CD4-positive, alpha-beta T cell (primary cell): ENCODE measurements at regions of chr7 and their contacts with region 1.

Region 1: DNA sequence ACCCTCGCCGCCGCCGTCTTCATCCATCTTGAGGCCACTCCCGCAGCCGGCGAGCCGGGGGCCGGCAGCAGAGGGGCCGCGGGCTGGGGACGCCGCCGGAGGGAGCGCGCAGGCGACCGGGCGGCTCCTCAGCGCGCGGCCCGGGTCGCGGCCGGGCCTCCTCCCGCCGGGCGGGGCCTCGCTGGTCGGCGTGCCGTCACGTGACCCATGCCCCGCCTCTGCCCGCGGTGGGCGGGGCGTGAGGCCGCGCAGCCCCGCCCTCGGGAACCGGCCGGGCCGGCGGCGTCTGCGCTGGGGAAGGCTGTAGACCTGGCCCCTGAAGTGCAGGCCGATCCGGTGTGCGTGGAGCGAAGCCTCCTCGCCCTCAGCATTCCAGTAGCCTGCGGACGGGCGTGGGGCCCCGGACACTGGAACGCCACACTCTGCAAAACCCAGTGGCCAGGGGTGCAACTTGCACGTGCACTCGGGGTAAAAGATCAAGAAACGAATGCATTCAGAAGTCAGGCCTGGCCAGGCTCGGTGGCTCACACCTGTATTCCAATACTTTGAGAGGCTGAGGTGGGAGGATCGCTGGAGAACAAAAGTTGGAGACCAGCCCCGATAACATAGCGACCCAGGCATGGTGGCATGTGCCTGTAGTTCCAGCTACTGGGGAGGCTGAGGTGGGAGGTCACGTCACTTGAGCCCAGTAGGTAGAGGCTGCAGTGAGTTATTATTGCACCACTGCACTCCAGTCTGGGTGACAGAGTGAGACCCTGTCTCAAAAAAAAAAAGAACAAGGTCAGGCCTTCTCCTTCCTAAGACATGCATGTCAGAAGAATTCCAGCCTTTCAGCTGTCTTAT is at the start of gene CYTH3:
- DNase-seq: peak; percentile 39 to 91 (median 72)
- ATAC-seq: peak; percentile 82
- H3K4me3 ChIP-seq: peak within 1 kb of the TSS; percentile 74
- H3K4me3 Mint-ChIP-seq: peak within 1 kb of the TSS; percentile 91
- H3K27ac ChIP-seq: no peak within 1 kb of the TSS
- H3K27ac Mint-ChIP-seq: no peak within 1 kb of the TSS
- H3K4me1 ChIP-seq: peaks cover 21% of the 10 kb centered on the region
- H3K4me1 Mint-ChIP-seq: peaks cover 20% of the 10 kb centered on the region
- H3K27me3 ChIP-seq: no peaks in the 10 kb centered on the region
- H3K27me3 Mint-ChIP-seq: peaks cover 6% of the 10 kb centered on the region
- CTCF ChIP-seq: no peak
- total RNA-seq, gene CYTH3: 7.6 to 9.1 TPM

Region 2: DNA sequence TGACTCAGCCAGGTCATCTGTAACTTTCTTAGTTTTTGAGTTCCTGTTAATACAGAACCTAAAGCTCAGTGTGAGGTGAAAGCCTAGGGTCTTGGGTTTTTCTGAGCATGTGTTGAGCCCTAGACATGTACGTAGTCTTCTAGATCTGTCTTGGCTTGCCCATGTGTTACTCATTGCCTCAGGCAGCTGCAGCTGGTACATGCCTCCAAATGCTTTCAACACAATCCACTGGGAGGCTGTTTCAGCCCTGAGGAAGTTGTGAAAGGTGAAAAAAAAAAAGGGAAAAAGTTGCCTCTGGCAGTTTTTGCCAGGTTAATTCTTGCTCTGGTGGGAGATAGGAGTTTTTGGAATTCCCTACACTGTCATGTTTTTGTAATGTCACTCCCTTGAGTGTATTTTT is 625.9 kb before region 1 on chr7:
- CTCF ChIA-PET with region 1: no interaction called
- POLR2A ChIA-PET with region 1: no interaction called
- intact Hi-C with region 1: no loop called
- DNase-seq: no peak
- ATAC-seq: no peak
- H3K4me3 ChIP-seq: no peak overlapping the region
- H3K4me3 Mint-ChIP-seq: no peak overlapping the region
- H3K27ac ChIP-seq: no peak overlapping the region
- H3K27ac Mint-ChIP-seq: no peak overlapping the region
- H3K4me1 ChIP-seq: peaks cover 30% of the 10 kb centered on the region
- H3K4me1 Mint-ChIP-seq: peaks cover 30% of the 10 kb centered on the region
- H3K27me3 ChIP-seq: no peaks in the 10 kb centered on the region
- H3K27me3 Mint-ChIP-seq: no peaks in the 10 kb centered on the region
- CTCF ChIP-seq: no peak

Region 3: GRCh38 chr7:5773661-5774086 is 499.0 kb before region 1 on chr7:
- CTCF ChIA-PET with region 1: no interaction called
- POLR2A ChIA-PET with region 1: no interaction called
- intact Hi-C with region 1: no loop called
- DNase-seq: peak in 8 of 14 experiments; percentile 5 to 75 (median 14)
- ATAC-seq: no peak
- H3K4me3 ChIP-seq: no peak overlapping the region
- H3K4me3 Mint-ChIP-seq: peak overlapping the region; percentile 7
- H3K27ac ChIP-seq: no peak overlapping the region
- H3K27ac Mint-ChIP-seq: peak overlapping the region; percentile 30
- H3K4me1 ChIP-seq: peaks cover 41% of the 10 kb centered on the region
- H3K4me1 Mint-ChIP-seq: peaks cover 65% of the 10 kb centered on the region
- H3K27me3 ChIP-seq: no peaks in the 10 kb centered on the region
- H3K27me3 Mint-ChIP-seq: no peaks in the 10 kb centered on the region
- CTCF ChIP-seq: no peak

Region 4: GRCh38 chr7:6228361-6229229 is 44.1 kb before region 1 on chr7:
- CTCF ChIA-PET with region 1: no interaction called
- POLR2A ChIA-PET with region 1: no interaction called
- intact Hi-C with region 1: loop called in 1 of 2 experiments (anchors 10 kb)
- DNase-seq: peak in 1 of 14 experiments; percentile 22
- ATAC-seq: peak; percentile 54
- H3K4me3 ChIP-seq: no peak overlapping the region
- H3K4me3 Mint-ChIP-seq: no peak overlapping the region
- H3K27ac ChIP-seq: no peak overlapping the region
- H3K27ac Mint-ChIP-seq: no peak overlapping the region
- H3K4me1 ChIP-seq: peaks cover 18% of the 10 kb centered on the region
- H3K4me1 Mint-ChIP-seq: peaks cover 36% of the 10 kb centered on the region
- H3K27me3 ChIP-seq: no peaks in the 10 kb centered on the region
- H3K27me3 Mint-ChIP-seq: no peaks in the 10 kb centered on the region
- CTCF ChIP-seq: no peak

Region 5: GRCh38 chr7:6505685-6506574 is 233.2 kb after region 1 on chr7:
- CTCF ChIA-PET with region 1: no interaction called
- POLR2A ChIA-PET with region 1: no interaction called
- intact Hi-C with region 1: loop called in 1 of 2 experiments (anchors 5 kb)
- DNase-seq: peak in 1 of 14 experiments; percentile 29
- ATAC-seq: no peak
- H3K4me3 ChIP-seq: no peak overlapping the region
- H3K4me3 Mint-ChIP-seq: no peak overlapping the region
- H3K27ac ChIP-seq: no peak overlapping the region
- H3K27ac Mint-ChIP-seq: no peak overlapping the region
- H3K4me1 ChIP-seq: peaks cover 12% of the 10 kb centered on the region
- H3K4me1 Mint-ChIP-seq: peaks cover 9% of the 10 kb centered on the region
- H3K27me3 ChIP-seq: no peaks in the 10 kb centered on the region
- H3K27me3 Mint-ChIP-seq: no peaks in the 10 kb centered on the region
- CTCF ChIP-seq: no peak

Region 6: DNA sequence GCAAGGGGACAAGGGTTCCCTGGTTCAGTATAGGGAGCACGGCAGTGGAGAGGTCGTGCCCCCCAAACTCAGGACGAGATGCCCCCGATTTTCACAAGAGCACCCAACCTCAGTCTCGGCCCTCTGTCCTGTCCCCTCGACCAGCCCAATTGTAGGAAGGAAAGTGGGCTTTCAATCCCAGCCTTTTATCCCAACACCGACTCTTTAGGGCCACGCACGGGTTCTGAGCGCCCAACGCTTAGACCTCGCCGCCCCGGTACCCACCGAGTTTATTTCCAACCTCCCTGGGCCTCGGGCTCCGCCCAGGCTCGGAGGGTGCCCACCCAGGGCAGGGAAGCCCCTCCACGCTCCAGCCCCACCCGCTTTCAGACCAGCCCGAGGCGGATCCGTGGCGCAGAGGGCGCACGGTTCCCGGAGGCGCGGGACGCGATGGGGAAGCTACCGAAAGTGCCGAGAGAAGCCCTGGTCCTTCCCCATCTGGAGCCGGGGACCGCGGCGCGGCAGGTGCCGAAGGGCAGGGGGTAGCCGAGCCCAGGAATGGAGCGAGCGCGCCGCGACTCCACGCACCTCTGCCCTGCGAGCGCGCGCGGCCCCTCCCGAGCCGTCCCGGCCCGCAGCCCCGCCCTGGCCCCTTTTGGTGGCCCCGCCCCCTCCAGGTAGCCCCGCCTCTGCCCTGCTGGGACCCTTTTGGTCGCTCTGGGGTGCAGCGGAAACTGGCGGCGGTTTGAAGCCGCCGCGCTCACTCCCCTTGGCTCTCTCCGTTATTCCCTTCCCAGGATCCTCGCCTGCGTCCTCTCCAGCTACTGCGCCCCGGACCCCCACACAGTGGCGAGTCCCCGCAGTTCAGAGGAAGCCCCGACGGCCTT is 258.2 kb after region 1 on chr7:
- CTCF ChIA-PET with region 1: no interaction called
- POLR2A ChIA-PET with region 1: no interaction called
- intact Hi-C with region 1: no loop called
- DNase-seq: peak; percentile 27 to 79 (median 58)
- ATAC-seq: peak; percentile 79
- H3K4me3 ChIP-seq: peak overlapping the region; percentile 62
- H3K4me3 Mint-ChIP-seq: peak overlapping the region; percentile 84
- H3K27ac ChIP-seq: no peak overlapping the region
- H3K27ac Mint-ChIP-seq: no peak overlapping the region
- H3K4me1 ChIP-seq: peaks cover 27% of the 10 kb centered on the region
- H3K4me1 Mint-ChIP-seq: peaks cover 18% of the 10 kb centered on the region
- H3K27me3 ChIP-seq: peaks cover 28% of the 10 kb centered on the region in 2 experiments
- H3K27me3 Mint-ChIP-seq: peaks cover 17% of the 10 kb centered on the region
- CTCF ChIP-seq: no peak

Region 7: DNA sequence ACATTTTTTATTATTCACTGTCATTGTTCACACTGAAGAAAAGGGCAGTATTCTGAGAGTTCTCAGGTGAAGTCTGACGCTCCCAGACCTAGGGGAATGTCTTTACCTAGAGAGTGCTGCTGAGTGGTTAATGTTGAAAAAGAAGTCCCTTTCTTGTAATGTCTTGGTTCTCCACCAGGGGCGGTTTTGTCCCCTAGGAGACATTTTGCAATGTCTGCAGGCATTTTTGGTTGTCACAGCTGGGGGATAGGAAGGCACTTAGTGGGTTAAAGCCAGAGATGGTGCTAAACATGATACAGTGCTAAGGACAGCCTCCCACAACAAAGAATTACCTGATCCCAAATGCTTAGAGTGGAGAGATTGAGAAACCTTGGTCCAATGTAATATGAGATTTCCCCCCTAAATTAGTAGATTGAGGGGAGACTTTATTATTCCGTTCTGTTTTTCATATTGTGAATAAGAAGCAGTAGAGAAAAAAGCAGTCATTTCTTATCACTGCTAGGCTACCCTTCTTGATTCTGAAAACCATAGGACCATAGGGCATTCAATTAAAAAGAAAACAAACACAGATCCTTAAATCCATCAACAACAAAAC is 1381.0 kb after region 1 on chr7:
- CTCF ChIA-PET with region 1: no interaction called
- POLR2A ChIA-PET with region 1: no interaction called
- intact Hi-C with region 1: no loop called
- DNase-seq: peak in 4 of 14 experiments; percentile 23 to 40 (median 28)
- ATAC-seq: no peak
- H3K4me3 ChIP-seq: no peak overlapping the region
- H3K4me3 Mint-ChIP-seq: no peak overlapping the region
- H3K27ac ChIP-seq: no peak overlapping the region
- H3K27ac Mint-ChIP-seq: no peak overlapping the region
- H3K4me1 ChIP-seq: no peaks in the 10 kb centered on the region
- H3K4me1 Mint-ChIP-seq: peaks cover 76% of the 10 kb centered on the region
- H3K27me3 ChIP-seq: no peaks in the 10 kb centered on the region
- H3K27me3 Mint-ChIP-seq: no peaks in the 10 kb centered on the region
- CTCF ChIP-seq: peak; percentile 49